ENCODE measurements at regions of chr2 and their contacts with region 1.

Region 1: GRCh38 chr2:197477797-197478196 is 21.8 kb downstream of the HSPD1 start:
- DNase-seq: no peak
- H3K4me3 ChIP-seq: no peak overlapping the region
- CTCF ChIP-seq: no peak

Region 2: GRCh38 chr2:197405582-197405981 is 72.2 kb before region 1 on chr2:
- in situ Hi-C with region 1: loop called (anchors 5 kb)
- DNase-seq: no peak
- H3K4me3 ChIP-seq: no peak overlapping the region
- CTCF ChIP-seq: no peak